Left ventricle myocardium inferior (tissue), 1 donor: ENCODE measurements at regions of chr10 and their contacts with region 1.

Region 1: GRCh38 chr10:88553116-88553752 is 29.9 kb downstream of the RNLS start:
- DNase-seq: no peak
- H3K4me3 ChIP-seq: no peak overlapping the region
- H3K27ac ChIP-seq: no peak overlapping the region
- H3K4me1 ChIP-seq: no peaks in the 10 kb centered on the region
- H3K27me3 ChIP-seq: no peaks in the 10 kb centered on the region
- CTCF ChIP-seq: peak; percentile 84

Region 2: DNA sequence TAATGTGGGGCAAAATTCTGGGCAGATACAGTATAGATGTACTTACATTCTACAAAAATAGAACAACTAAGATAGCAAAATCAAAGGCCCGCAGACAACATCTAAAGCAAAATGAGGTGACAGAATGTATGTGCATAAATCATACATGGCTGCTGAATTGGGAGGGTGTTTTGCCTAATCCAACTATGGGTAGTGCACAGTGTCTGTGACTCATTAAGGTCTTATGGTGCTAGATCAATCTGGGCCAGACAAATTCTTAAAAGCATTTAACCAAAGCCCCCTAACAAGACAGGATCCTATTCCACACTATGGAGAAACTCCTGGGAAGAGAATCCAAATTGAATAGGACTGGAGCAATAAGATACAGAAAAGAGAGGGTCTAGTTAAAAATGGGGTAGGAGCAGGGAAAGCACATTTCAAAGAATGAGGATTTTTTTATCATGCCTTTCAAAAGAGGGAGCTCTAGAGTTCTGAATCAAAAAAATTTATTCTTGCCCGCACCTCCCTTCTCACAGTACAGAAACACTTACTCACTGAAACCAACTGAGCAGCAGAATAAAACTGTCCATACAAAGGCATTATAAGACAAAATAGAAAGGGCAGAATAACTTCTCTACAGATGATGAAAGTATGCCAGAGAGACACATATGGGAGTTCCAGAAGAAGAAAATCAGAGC is 151.4 kb before region 1 on chr10:
- intact Hi-C with region 1: loop called (anchors 5 kb)
- DNase-seq: no peak
- H3K4me3 ChIP-seq: no peak overlapping the region
- H3K27ac ChIP-seq: no peak overlapping the region
- H3K4me1 ChIP-seq: peaks cover 2% of the 10 kb centered on the region
- H3K27me3 ChIP-seq: no peaks in the 10 kb centered on the region
- CTCF ChIP-seq: peak; percentile 41